Naive thymus-derived CD8-positive, alpha-beta T cell (primary cell): ENCODE measurements at regions of chr2 and their contacts with region 1.

Region 1: DNA sequence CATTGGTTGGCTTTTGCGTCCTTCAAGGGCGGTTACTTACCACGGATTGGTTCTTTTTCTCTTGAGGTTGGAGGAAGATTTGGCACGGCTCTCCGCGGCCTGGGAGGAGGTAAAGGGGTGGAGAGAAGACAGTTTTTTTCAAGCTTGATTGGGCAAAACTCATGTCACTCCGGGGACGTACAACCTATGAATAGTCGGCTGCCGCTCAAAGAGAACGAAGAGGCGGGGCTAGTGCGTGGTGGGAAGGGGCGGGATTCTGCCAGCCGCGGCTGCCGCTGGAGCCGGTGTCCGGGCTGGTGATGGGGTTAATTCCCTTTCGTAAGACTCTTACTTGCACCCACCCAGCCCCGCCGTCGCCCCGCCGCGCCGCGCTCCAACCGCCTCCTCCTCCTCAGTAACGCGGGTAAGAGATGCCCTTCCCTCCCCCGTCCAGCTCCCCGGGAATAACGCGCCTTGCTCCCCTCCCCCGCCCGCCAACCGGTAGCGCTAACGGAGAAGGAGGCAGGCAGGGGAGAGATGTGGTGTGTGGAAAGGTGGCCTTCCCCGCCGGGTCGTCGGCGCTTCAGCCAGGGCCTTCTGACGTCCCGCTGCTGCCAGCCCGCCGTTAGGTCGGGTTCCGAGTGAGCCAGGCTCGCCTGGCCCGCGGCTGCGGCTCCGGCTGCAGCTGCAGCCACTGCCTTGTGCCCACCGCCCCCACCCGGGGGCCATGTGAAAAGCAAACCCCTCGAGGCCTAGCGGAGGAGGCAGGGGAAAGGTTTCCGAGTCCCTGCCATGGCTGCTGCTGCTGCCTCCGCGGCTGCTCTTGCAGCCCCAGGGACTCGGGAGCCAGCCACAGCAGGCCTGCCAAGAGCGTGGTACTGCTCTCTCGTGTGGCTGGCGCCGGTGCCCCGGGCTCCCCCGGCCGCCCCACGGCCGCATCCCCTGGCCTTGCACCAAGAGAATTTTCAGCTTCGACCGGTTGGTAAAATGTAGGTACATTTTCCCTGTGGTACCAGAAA is at the start of gene R3HDM1:
- DNase-seq: peak in 9 of 10 donors; percentile 80 to 98 (median 95)
- ATAC-seq: peak; percentile 80 to 81
- H3K4me3 Mint-ChIP-seq: no peak within 1 kb of the TSS
- H3K27ac Mint-ChIP-seq: peak within 1 kb of the TSS in 8 of 10 donors; percentile 24 to 94 (median 84)
- H3K4me1 Mint-ChIP-seq: peaks cover 3 to 44% (median 30%) of the 10 kb centered on the region in 4 donors
- H3K27me3 Mint-ChIP-seq: no peaks in the 10 kb centered on the region
- polyA plus RNA-seq, gene R3HDM1: 12.5 to 26.2 (median 23.7) TPM

Region 2: GRCh38 chr2:134581877-134582546 is 949.5 kb before region 1 on chr2:
- POLR2A ChIA-PET with region 1: no interaction called
- DNase-seq: no peak
- ATAC-seq: no peak
- H3K4me3 Mint-ChIP-seq: peak overlapping the region in 1 of 10 donors; percentile 1
- H3K27ac Mint-ChIP-seq: peak overlapping the region in 1 of 10 donors; percentile 9
- H3K4me1 Mint-ChIP-seq: peaks cover 3 to 18% (median 14%) of the 10 kb centered on the region in 4 donors
- H3K27me3 Mint-ChIP-seq: peaks cover 0 to 4% (median 0%) of the 10 kb centered on the region in 5 donors

Region 3: GRCh38 chr2:134917888-134918525 is 613.5 kb before region 1 on chr2:
- POLR2A ChIA-PET with region 1: interaction called, 14 read pairs
- DNase-seq: peak in 9 of 10 donors; percentile 77 to 92 (median 88)
- ATAC-seq: peak; percentile 78 to 79
- H3K4me3 Mint-ChIP-seq: peak overlapping the region; percentile 91 to 99 (median 97)
- H3K27ac Mint-ChIP-seq: peak overlapping the region; percentile 95 to 100 (median 99)
- H3K4me1 Mint-ChIP-seq: peaks cover 15 to 56% (median 36%) of the 10 kb centered on the region in 4 donors
- H3K27me3 Mint-ChIP-seq: peaks cover 0 to 3% (median 0%) of the 10 kb centered on the region in 5 donors

Region 4: GRCh38 chr2:135052042-135052876 is 479.3 kb before region 1 on chr2 and contains the start of gene RAB3GAP1:
- POLR2A ChIA-PET with region 1: interaction called, 13 read pairs
- DNase-seq: peak; percentile 79 to 97 (median 92)
- ATAC-seq: peak; percentile 85
- H3K4me3 Mint-ChIP-seq: peak within 1 kb of the TSS; percentile 91 to 99 (median 96)
- H3K27ac Mint-ChIP-seq: peak within 1 kb of the TSS; percentile 99 to 100 (median 100)
- H3K4me1 Mint-ChIP-seq: peaks cover 19 to 43% (median 40%) of the 10 kb centered on the region in 4 donors
- H3K27me3 Mint-ChIP-seq: peaks cover 0 to 3% (median 0%) of the 10 kb centered on the region in 5 donors
- polyA plus RNA-seq, gene RAB3GAP1: 14.6 to 23.2 (median 21.7) TPM

Region 5: DNA sequence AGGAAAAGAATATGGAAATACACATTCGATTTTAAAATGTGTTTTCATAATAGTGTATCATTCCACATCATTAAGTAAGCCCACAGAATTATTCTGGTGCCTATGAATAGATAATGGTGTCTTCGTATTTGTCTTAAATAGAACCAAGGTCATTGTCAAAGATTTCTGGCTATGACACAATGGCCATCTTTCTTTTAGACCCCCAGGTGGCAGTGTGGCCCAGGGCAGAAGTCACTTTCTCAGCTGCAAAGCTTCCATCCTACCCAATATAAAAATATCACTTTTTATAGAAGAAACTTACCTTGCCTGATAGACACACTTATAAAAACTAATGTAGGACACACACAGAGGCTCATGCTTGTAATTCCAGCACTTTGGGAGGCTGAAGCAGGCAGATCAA is 58.0 kb before region 1 on chr2:
- POLR2A ChIA-PET with region 1: no interaction called
- DNase-seq: peak in 7 of 10 donors; percentile 10 to 64 (median 24)
- ATAC-seq: peak in 1 of 2 donors; percentile 30
- H3K4me3 Mint-ChIP-seq: no peak overlapping the region
- H3K27ac Mint-ChIP-seq: no peak overlapping the region
- H3K4me1 Mint-ChIP-seq: no peaks in the 10 kb centered on the region
- H3K27me3 Mint-ChIP-seq: no peaks in the 10 kb centered on the region

Region 6: GRCh38 chr2:135555310-135555709 is 23.8 kb after region 1 on chr2:
- POLR2A ChIA-PET with region 1: no interaction called
- DNase-seq: no peak
- ATAC-seq: no peak
- H3K4me3 Mint-ChIP-seq: no peak overlapping the region
- H3K27ac Mint-ChIP-seq: no peak overlapping the region
- H3K4me1 Mint-ChIP-seq: peaks cover 9 to 40% (median 18%) of the 10 kb centered on the region in 4 donors
- H3K27me3 Mint-ChIP-seq: no peaks in the 10 kb centered on the region

Region 7: GRCh38 chr2:135657806-135658582 is 126.5 kb after region 1 on chr2:
- POLR2A ChIA-PET with region 1: interaction called, 13 read pairs
- DNase-seq: peak; percentile 40 to 87 (median 74)
- ATAC-seq: peak; percentile 97 to 98
- H3K4me3 Mint-ChIP-seq: peak overlapping the region; percentile 70 to 93 (median 84)
- H3K27ac Mint-ChIP-seq: peak overlapping the region; percentile 82 to 99 (median 98)
- H3K4me1 Mint-ChIP-seq: peaks cover 8 to 19% (median 14%) of the 10 kb centered on the region in 4 donors
- H3K27me3 Mint-ChIP-seq: no peaks in the 10 kb centered on the region